Activated T-helper 1 cell treated with anti-CD3 and anti-CD28 coated beads, Interleukin-12 subunit alpha, Interleukin-12 subunit beta, Interleukin-2, Interleukin-4 antibody, amounts not matched to agents 30 ng/mL and 10 ng/mL and 1 ng/mL, durations not matched to agents 14 hours and 24 hours and 36 hours (primary cell): ENCODE measurements at regions of chr9 and their contacts with region 1.

Region 1: GRCh38 chr9:110256380-110257096 is at the start of gene TXN:
- DNase-seq: peak; percentile 85
- H3K4me3 Mint-ChIP-seq: peak within 1 kb of the TSS; percentile 98
- H3K27ac Mint-ChIP-seq: peak within 1 kb of the TSS; percentile 100
- H3K4me1 Mint-ChIP-seq: peaks cover 59% of the 10 kb centered on the region
- H3K27me3 Mint-ChIP-seq: peaks cover 10% of the 10 kb centered on the region
- total RNA-seq, gene TXN: 412 and 422 TPM in 2 replicates

Region 2: GRCh38 chr9:108933718-108934322 is 1322.7 kb before region 1 on chr9 and contains the start of gene ELP1:
- intact Hi-C with region 1: loop called (anchors 5 kb)
- DNase-seq: peak; percentile 90
- H3K4me3 Mint-ChIP-seq: peak within 1 kb of the TSS; percentile 95
- H3K27ac Mint-ChIP-seq: peak within 1 kb of the TSS; percentile 95
- H3K4me1 Mint-ChIP-seq: peaks cover 23% of the 10 kb centered on the region
- H3K27me3 Mint-ChIP-seq: no peaks in the 10 kb centered on the region
- total RNA-seq, gene ELP1: 31.6 and 35.2 TPM in 2 replicates

Region 3: DNA sequence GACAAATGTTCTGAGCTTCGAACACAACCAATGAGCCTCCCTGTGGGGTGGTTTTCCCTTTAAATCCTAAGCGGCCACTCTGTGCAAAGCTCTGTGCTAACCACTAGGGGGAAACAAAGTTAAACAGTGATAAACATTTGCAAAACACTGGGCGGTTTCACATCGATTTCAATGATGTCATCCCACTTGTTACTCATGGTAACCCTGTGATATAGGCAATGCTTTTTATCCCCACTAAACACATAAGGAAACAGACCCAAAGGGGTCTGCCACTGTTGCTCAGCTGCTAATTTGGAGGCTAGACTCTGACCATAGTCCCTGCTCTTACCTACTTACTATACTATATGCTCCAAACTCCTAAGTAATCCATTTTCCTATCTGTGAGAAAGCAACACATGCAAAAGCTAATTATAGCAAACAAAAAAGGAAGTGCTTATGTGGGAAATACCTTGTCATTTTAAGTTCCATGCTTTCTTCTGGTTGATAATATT is 815.7 kb before region 1 on chr9:
- intact Hi-C with region 1: loop called (anchors 10 kb)
- DNase-seq: peak; percentile 71
- H3K4me3 Mint-ChIP-seq: no peak overlapping the region
- H3K27ac Mint-ChIP-seq: peak overlapping the region; percentile 85
- H3K4me1 Mint-ChIP-seq: peaks cover 34% of the 10 kb centered on the region
- H3K27me3 Mint-ChIP-seq: peaks cover 9% of the 10 kb centered on the region

Region 4: DNA sequence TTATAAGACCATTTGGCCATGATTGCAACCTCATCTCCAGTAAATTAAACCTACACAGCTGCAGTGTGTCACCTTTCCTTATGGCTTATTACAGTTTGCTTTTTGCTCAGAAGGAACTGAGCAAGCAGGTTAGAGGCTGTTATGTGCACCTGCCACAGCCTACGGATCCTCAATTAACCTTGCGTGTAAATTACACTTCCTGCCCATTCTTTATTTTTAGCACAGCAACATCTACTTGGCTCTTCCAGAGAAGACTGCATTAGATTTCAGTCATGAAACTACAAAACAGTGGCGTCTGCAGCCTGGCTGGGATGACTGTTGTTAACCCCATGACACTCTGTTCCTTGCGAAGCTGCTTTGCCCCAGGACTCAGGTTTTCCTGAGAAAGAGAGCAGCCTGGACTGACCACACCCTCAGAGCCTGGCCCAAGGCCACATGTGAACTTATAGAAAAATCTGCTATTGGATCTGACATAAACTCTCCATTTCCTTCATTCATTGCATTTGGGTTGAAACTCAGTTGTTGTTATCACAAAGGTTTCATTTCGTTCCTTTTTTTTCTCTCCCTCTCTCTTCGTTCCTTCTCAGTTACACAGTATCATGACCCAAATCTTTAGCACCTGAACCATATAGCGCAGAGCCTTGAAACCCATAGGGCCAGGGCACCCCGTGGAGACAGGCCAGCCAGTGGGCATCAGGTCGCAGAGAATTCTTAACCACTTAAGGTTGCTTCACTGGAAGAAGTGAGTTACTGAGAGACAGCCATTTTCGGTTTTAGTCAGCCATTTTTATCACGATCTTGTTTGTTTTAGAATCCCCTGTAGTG is 338.0 kb before region 1 on chr9:
- intact Hi-C with region 1: loop called (anchors 1 kb)
- DNase-seq: peak; percentile 44
- H3K4me3 Mint-ChIP-seq: peak overlapping the region; percentile 75
- H3K27ac Mint-ChIP-seq: peak overlapping the region; percentile 97
- H3K4me1 Mint-ChIP-seq: peaks cover 64% of the 10 kb centered on the region
- H3K27me3 Mint-ChIP-seq: no peaks in the 10 kb centered on the region

Region 5: GRCh38 chr9:110623462-110624025 is 367.0 kb after region 1 on chr9:
- intact Hi-C with region 1: loop called (anchors 10 kb)
- DNase-seq: no peak
- H3K4me3 Mint-ChIP-seq: no peak overlapping the region
- H3K27ac Mint-ChIP-seq: no peak overlapping the region
- H3K4me1 Mint-ChIP-seq: peaks cover 11% of the 10 kb centered on the region
- H3K27me3 Mint-ChIP-seq: peaks cover 5% of the 10 kb centered on the region